Activated B cell treated with CpG ODN at 0.5 μM for 24 hours (primary cell): ENCODE measurements at regions of chr22 and their contacts with region 1.

Region 1: DNA sequence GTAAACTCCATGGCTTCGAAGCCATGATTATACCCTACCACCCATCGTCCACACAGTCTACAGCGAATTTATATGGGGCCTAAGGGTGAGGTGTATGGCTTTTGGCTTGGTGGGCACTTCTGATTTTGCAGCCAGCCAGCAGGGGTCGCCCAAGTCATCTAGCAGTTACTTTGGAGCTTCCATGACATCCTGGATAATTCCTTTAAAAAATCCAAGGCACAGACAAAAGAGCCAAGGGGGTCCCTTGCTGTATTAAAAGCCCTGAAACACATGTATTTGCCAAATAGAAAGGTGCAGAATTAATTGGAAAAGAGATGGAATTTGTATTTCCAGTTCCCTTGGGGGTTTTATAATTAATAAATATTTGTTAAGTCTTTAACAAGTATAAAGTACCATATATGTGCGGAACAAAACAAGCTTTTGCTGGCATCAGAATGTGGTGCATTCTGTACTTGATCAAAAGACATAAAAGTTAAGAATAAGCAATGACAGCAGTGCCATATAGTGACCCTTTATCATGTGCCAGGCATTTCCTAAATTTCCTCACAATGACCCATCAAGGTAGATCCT is 132.8 kb upstream of the PITPNB start:
- DNase-seq: no peak
- ATAC-seq: no peak
- H3K4me3 Mint-ChIP-seq: no peak overlapping the region
- H3K27ac Mint-ChIP-seq: no peak overlapping the region
- H3K4me1 Mint-ChIP-seq: no peaks in the 10 kb centered on the region
- H3K27me3 Mint-ChIP-seq: no peaks in the 10 kb centered on the region
- CTCF ChIP-seq: no peak

Region 2: GRCh38 chr22:28442264-28442710 is 390.4 kb after region 1 on chr22:
- CTCF ChIA-PET with region 1: interaction called, 3 read pairs
- POLR2A ChIA-PET with region 1: no interaction called
- intact Hi-C with region 1: loop called (anchors 10 kb)
- DNase-seq: peak; percentile 42
- ATAC-seq: peak; percentile 82
- H3K4me3 Mint-ChIP-seq: peak overlapping the region; percentile 67
- H3K27ac Mint-ChIP-seq: no peak overlapping the region
- H3K4me1 Mint-ChIP-seq: peaks cover 20% of the 10 kb centered on the region
- H3K27me3 Mint-ChIP-seq: peaks cover 31% of the 10 kb centered on the region
- CTCF ChIP-seq: no peak